ENCODE measurements at regions of chrX and their contacts with region 1.

Region 1: DNA sequence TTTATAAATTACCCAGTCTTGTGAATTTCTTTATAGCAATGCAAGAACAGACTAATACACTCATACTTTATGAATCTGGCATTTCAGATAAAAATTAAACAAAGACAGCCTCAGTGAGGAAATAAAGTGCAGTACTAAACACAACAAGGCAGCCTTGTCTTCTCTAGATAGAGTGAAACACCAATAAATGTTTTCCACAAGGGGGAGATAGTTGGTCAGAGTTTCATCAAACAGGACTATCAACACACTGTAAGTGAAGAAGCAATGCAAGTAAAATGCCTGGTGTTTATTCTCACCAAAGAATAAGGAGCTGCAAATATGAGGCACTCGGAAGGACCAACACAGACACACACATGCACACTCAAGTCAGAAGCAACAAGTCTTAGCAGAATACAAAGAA is 62.8 kb downstream of the FAM9B start:
- DNase-seq: peak in 2 of 9 experiments; percentile 51 to 67
- ATAC-seq: peak; percentile 57
- H3K4me3 ChIP-seq: no peak overlapping the region
- H3K4me3 Mint-ChIP-seq: no peak overlapping the region
- H3K27ac ChIP-seq: no peak overlapping the region
- H3K27ac Mint-ChIP-seq: no peak overlapping the region
- H3K4me1 ChIP-seq: no peaks in the 10 kb centered on the region
- H3K4me1 Mint-ChIP-seq: peaks cover 2% of the 10 kb centered on the region
- H3K27me3 ChIP-seq: no peaks in the 10 kb centered on the region
- H3K27me3 Mint-ChIP-seq: no peaks in the 10 kb centered on the region
- CTCF ChIP-seq: peak; percentile 43

Region 2: DNA sequence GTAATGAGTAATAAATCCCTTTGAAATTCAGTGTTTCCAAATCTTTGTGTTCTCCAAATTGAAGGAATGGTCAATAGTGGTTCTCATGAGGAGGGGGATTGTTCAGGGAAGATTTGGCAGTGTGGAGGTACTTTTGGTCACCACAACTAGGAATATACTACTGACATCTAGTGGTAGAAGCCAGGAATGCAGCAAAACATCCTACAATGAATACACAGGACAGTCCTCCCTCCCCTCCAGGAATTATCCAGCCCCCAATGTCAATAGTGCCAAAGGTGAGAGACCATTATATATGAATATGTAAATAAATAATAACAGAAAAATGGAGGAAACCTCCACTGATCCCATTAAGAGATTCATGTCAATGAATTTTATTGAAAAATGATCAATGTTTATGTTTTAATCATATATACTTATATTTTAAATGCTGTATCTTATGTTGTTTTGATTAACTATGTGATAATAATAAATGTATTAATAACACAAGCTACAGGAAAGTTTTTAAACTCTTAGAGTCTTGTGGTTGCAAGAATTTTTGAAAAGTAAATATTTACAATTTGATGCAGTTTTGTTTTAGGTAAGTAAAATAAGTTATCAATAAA is 155.6 kb before region 1 on chrX:
- CTCF ChIA-PET with region 1: no interaction called
- POLR2A ChIA-PET with region 1: no interaction called
- intact Hi-C with region 1: loop called in 1 of 2 experiments (anchors 10 kb)
- DNase-seq: peak in 3 of 9 experiments; percentile 25 to 57 (median 48)
- ATAC-seq: peak; percentile 31
- H3K4me3 ChIP-seq: no peak overlapping the region
- H3K4me3 Mint-ChIP-seq: no peak overlapping the region
- H3K27ac ChIP-seq: no peak overlapping the region
- H3K27ac Mint-ChIP-seq: no peak overlapping the region
- H3K4me1 ChIP-seq: no peaks in the 10 kb centered on the region
- H3K4me1 Mint-ChIP-seq: no peaks in the 10 kb centered on the region
- H3K27me3 ChIP-seq: no peaks in the 10 kb centered on the region
- H3K27me3 Mint-ChIP-seq: peaks cover 3% of the 10 kb centered on the region
- CTCF ChIP-seq: peak; percentile 75

Region 3: DNA sequence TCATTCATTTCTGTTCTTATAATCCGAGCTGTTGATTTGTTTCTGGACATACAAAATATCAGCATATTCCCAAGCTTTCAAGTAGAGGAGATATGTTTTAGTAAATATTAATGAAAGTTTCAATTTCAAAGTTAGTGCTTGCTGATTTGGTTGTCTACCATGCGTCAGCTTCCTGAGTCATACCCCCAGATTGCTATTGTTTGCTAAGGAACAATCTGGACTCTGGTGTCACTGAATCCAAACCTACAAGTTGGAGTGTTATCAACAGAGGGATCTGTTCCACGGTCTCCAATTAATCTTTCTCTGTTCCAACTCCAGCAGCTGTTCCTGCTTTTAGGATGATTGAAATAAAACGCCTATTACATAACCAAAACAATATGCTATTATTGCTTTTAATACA is 73.9 kb before region 1 on chrX:
- CTCF ChIA-PET with region 1: interaction called, 3 read pairs
- POLR2A ChIA-PET with region 1: no interaction called
- intact Hi-C with region 1: loop called in 1 of 2 experiments (anchors 2 kb)
- DNase-seq: no peak
- ATAC-seq: no peak
- H3K4me3 ChIP-seq: no peak overlapping the region
- H3K4me3 Mint-ChIP-seq: no peak overlapping the region
- H3K27ac ChIP-seq: no peak overlapping the region
- H3K27ac Mint-ChIP-seq: no peak overlapping the region
- H3K4me1 ChIP-seq: no peaks in the 10 kb centered on the region
- H3K4me1 Mint-ChIP-seq: no peaks in the 10 kb centered on the region
- H3K27me3 ChIP-seq: no peaks in the 10 kb centered on the region
- H3K27me3 Mint-ChIP-seq: peaks cover 2% of the 10 kb centered on the region
- CTCF ChIP-seq: no peak

Region 4: DNA sequence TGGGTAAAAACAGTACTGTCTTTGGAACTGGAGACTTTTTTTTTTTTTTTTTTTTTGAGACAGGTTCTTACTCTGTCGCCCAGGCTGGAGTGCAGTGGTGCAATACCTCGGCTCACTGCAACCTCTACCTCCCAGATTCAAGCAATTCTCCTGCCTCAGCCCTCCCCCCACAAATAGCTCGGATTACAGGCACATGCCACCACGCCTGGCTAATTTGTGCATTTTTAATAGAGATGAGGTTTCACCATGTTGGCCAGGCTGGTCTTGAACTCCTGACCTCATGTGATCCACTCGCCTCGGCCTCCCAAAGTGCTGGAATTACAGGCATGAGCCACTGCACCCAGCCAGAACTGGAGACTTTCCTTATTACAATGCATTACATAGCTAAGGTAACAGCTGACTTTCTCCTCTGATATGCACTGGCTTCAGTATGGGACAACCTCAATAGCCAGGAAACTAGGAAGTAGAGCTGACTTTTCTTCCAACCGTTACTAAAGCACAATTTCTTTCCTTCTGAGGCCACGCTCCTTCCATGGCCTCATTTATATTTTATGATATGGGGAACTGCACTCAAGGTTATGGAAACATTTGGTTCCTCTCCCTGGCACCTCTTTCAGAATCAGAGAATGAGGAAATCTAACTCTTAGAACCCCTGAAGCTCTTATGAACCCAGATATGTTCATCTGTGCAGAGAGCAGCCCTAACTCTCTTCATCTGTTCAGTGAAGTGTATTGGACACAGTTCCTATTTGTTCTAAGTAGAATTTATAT is 116.3 kb after region 1 on chrX:
- CTCF ChIA-PET with region 1: no interaction called
- POLR2A ChIA-PET with region 1: no interaction called
- intact Hi-C with region 1: no loop called
- DNase-seq: no peak
- ATAC-seq: no peak
- H3K4me3 ChIP-seq: no peak overlapping the region
- H3K4me3 Mint-ChIP-seq: no peak overlapping the region
- H3K27ac ChIP-seq: no peak overlapping the region
- H3K27ac Mint-ChIP-seq: no peak overlapping the region
- H3K4me1 ChIP-seq: no peaks in the 10 kb centered on the region
- H3K4me1 Mint-ChIP-seq: peaks cover 10% of the 10 kb centered on the region
- H3K27me3 ChIP-seq: no peaks in the 10 kb centered on the region
- H3K27me3 Mint-ChIP-seq: no peaks in the 10 kb centered on the region
- CTCF ChIP-seq: no peak

Region 5: GRCh38 chrX:9312922-9313867 is 342.1 kb after region 1 on chrX:
- CTCF ChIA-PET with region 1: interaction called, 3 read pairs
- POLR2A ChIA-PET with region 1: no interaction called
- intact Hi-C with region 1: loop called (anchors 2 to 5 kb)
- DNase-seq: peak; percentile 43 to 87 (median 72)
- ATAC-seq: peak; percentile 88
- H3K4me3 ChIP-seq: no peak overlapping the region
- H3K4me3 Mint-ChIP-seq: no peak overlapping the region
- H3K27ac ChIP-seq: no peak overlapping the region
- H3K27ac Mint-ChIP-seq: no peak overlapping the region
- H3K4me1 ChIP-seq: no peaks in the 10 kb centered on the region
- H3K4me1 Mint-ChIP-seq: peaks cover 12% of the 10 kb centered on the region
- H3K27me3 ChIP-seq: no peaks in the 10 kb centered on the region
- H3K27me3 Mint-ChIP-seq: no peaks in the 10 kb centered on the region
- CTCF ChIP-seq: peak; percentile 57

Region 6: GRCh38 chrX:9352694-9353411 is 381.7 kb after region 1 on chrX:
- CTCF ChIA-PET with region 1: no interaction called
- POLR2A ChIA-PET with region 1: no interaction called
- intact Hi-C with region 1: loop called in 1 of 2 experiments (anchors 5 kb)
- DNase-seq: peak in 5 of 9 experiments; percentile 27 to 70 (median 53)
- ATAC-seq: peak; percentile 9
- H3K4me3 ChIP-seq: peak overlapping the region; percentile 19 to 20
- H3K4me3 Mint-ChIP-seq: peak overlapping the region; percentile 74
- H3K27ac ChIP-seq: peak overlapping the region; percentile 44 to 47
- H3K27ac Mint-ChIP-seq: peak overlapping the region; percentile 80
- H3K4me1 ChIP-seq: peaks cover 32% of the 10 kb centered on the region
- H3K4me1 Mint-ChIP-seq: peaks cover 30% of the 10 kb centered on the region
- H3K27me3 ChIP-seq: no peaks in the 10 kb centered on the region
- H3K27me3 Mint-ChIP-seq: no peaks in the 10 kb centered on the region
- CTCF ChIP-seq: no peak

Measured in CD8-positive, alpha-beta T cell (primary cell).